HCT116 (cell line): ENCODE measurements at regions of chr3 and their contacts with region 1.

Region 1: GRCh38 chr3:16060358-16060852 is 114.1 kb upstream of the GALNT15 start:
- DNase-seq: peak; percentile 96
- ATAC-seq: peak; percentile 91
- H3K4me3 ChIP-seq: peak overlapping the region in 1 of 2 experiments; percentile 16; a peak in 1 of 4 replicates
- H3K27ac ChIP-seq: peak overlapping the region; percentile 48
- H3K4me1 ChIP-seq: peaks cover 20 to 40% of the 10 kb centered on the region in 2 experiments
- H3K27me3 ChIP-seq: no peaks in the 10 kb centered on the region
- CTCF ChIP-seq: peak; percentile 21 to 55 (median 42); a peak in 4 of 6 replicates
- POLR2A ChIP-seq: no peak
- RAD21 ChIP-seq: peak; percentile 58

Region 2: DNA sequence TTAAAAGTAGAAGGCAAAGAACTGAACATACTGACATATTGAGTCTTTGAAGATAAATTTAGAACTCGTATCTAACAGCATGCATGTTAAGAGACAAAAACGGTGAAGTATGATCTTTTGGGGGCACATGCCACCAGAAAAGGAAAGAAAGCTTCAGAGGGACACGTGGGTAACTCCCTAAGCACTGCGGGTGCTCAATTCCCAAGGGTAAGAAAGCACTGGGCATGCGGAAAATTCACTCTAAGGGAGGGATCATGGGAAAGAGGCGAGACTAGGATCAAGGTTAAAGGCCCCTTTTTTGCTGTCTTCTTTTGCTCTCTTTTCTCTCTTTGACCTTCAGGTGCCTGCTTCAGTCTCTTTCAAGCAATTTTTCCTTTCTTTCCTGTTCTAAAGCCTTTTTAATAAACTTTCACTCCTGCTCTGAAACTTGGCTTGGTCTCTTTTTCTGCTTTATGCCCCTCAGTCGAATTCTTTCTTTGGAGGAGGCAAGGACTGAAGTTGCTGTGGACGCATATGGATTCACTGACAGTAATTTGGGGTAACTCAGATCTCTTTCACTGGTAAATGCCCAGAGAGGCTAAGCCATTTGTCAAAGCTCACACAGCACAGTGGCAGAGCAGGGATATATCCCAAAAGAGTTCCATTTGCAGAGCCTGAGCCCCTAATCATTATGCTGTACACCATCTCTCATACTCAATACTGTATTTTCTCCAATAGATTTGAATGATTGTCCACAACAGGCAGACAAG is 41.6 kb after region 1 on chr3:
- CTCF ChIA-PET with region 1: interaction called, 3 read pairs
- POLR2A ChIA-PET with region 1: no interaction called
- RAD21 ChIA-PET with region 1: no interaction called
- intact Hi-C with region 1: loop called (anchors 1 kb)
- DNase-seq: peak; percentile 76
- ATAC-seq: peak; percentile 81
- H3K4me3 ChIP-seq: peak overlapping the region in 1 of 2 experiments; percentile 40; a peak in 3 of 4 replicates
- H3K27ac ChIP-seq: peak overlapping the region; percentile 72
- H3K4me1 ChIP-seq: peaks cover 13 to 31% of the 10 kb centered on the region in 2 experiments
- H3K27me3 ChIP-seq: no peaks in the 10 kb centered on the region
- CTCF ChIP-seq: no peak
- POLR2A ChIP-seq: no peak
- RAD21 ChIP-seq: no peak

Region 3: GRCh38 chr3:16177962-16178627 is 117.7 kb after region 1 on chr3:
- CTCF ChIA-PET with region 1: interaction called, 17 read pairs
- POLR2A ChIA-PET with region 1: no interaction called
- RAD21 ChIA-PET with region 1: interaction called, 3 to 5 read pairs
- intact Hi-C with region 1: no loop called
- DNase-seq: peak; percentile 38
- ATAC-seq: peak; percentile 97
- H3K4me3 ChIP-seq: no peak overlapping the region
- H3K27ac ChIP-seq: no peak overlapping the region
- H3K4me1 ChIP-seq: peaks cover 0 to 9% of the 10 kb centered on the region in 2 experiments; a peak in 1 of 4 replicates
- H3K27me3 ChIP-seq: no peaks in the 10 kb centered on the region
- CTCF ChIP-seq: peak; percentile 88 to 98 (median 96)
- POLR2A ChIP-seq: no peak
- RAD21 ChIP-seq: peak; percentile 98

Region 4: DNA sequence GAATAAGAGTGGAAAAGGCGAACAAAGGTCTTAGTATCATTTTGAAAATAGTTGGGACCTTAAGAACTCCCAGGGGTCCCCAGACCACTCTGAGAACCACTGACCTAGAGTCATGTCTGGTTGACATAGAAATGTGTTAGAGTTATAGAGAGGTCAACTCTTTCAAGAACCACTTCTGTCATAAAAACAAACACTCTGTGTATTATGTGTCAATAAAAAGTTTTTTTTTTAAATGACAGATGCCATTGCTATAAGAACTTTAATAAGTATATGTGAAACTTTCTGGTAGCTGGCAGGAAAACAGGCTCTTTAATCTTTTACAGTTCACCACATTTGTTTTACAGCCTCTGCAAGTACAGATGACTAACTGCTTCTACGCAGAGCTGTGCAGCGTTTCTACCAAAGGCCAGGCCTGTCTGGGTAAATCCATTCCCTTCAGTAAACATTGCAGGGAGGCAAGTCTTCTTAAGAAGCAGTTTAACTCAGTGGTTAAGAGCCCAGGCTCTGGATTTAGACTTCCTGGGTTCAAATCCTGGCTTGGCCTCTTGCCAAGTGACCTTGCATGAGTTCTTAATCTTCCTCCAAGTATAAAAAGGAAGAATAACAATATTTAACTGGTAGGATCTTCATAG is 396.5 kb after region 1 on chr3:
- CTCF ChIA-PET with region 1: no interaction called
- POLR2A ChIA-PET with region 1: no interaction called
- RAD21 ChIA-PET with region 1: no interaction called
- intact Hi-C with region 1: no loop called
- DNase-seq: no peak
- ATAC-seq: no peak
- H3K4me3 ChIP-seq: no peak overlapping the region
- H3K27ac ChIP-seq: no peak overlapping the region
- H3K4me1 ChIP-seq: no peaks in the 10 kb centered on the region
- H3K27me3 ChIP-seq: no peaks in the 10 kb centered on the region
- CTCF ChIP-seq: no peak
- POLR2A ChIP-seq: no peak
- RAD21 ChIP-seq: no peak